ENCODE measurements at regions of chr15 and their contacts with region 1.

Region 1: GRCh38 chr15:41774062-41774881 is at the start of gene MAPKBP1:
- DNase-seq: peak; percentile 97 to 98
- H3K4me3 ChIP-seq: peak within 1 kb of the TSS; percentile 71 to 78 (median 73)
- H3K27ac ChIP-seq: peak within 1 kb of the TSS; percentile 51; the same call in 1 of the 2 replicates
- H3K4me1 ChIP-seq: peaks cover 0 to 21% (median 10%) of the 10 kb centered on the region in 4 experiments; a peak in 5 of 7 replicates
- H3K27me3 ChIP-seq: no peaks in the 10 kb centered on the region
- CTCF ChIP-seq: peak; percentile 84 to 98 (median 87)
- EP300 ChIP-seq: peak in 1 of 2 experiments; percentile 42; a peak in 1 of 3 replicates
- POLR2A ChIP-seq: peak; percentile 56 to 60; a peak in 2 of 3 replicates
- RAD21 ChIP-seq: peak; percentile 63 to 69
- total RNA-seq, gene MAPKBP1: 10.9 and 11.3 TPM in 2 replicates

Region 2: DNA sequence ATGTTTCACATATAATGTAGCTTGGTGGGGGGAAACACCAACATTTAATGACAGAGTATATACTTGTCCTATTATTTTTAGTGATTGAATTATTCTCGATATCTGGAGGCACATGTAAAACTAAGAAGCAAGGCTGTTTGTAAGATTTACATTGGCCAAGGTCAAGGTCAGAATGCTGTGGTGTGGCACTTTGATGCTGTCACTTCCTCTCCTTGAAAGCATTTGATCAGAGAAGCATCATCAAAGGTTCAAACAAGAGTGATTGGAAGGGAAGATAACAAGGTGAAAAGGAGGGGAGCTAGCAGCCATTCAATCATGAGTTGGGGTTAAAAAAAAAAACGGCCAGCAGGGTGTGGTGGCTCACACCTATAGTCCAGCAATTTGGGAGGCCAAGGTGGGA is 331.0 kb before region 1 on chr15:
- CTCF ChIA-PET with region 1: no interaction called
- POLR2A ChIA-PET with region 1: no interaction called
- DNase-seq: no peak
- H3K4me3 ChIP-seq: no peak overlapping the region
- H3K27ac ChIP-seq: no peak overlapping the region
- H3K4me1 ChIP-seq: no peaks in the 10 kb centered on the region
- H3K27me3 ChIP-seq: no peaks in the 10 kb centered on the region
- CTCF ChIP-seq: no peak
- EP300 ChIP-seq: no peak
- POLR2A ChIP-seq: no peak
- RAD21 ChIP-seq: no peak

Region 3: DNA sequence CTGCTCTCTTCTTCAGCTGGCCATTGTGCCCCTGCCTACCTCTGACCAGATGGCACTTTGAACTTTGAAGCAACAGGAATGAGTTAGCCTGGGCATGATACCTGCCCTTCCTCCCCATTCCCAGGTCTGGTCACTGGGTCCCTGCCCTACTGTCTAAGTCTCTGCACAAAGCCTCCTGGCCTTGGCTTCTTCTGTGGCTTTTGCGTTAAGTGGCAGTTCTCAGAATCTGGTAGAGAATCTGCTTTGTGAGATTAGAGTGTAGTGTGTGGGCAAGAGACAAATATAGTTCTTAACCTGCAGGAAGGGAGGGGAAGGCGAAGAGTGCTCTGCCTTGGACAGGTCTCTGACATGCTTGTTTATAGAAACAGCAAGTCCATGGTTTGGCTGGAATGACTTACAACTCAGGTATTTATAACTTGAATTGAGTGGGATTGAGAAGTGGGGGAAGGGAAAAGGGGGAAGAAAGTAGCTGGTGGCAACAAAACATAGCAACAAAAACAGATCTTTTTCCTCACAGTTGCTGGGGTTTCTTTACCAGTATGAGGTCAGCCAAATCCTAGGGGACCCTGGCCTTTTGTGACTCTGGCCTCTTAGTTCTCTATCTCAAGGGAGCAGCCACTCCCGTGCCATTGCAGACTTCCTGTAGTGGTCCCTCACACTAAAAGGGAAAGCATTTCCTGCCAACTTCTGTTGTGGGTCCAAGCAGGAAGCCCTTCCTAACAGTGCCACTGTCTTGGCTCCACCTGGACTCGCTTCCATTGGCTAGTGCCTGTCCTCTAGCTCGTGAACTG is 16.7 kb after region 1 on chr15:
- CTCF ChIA-PET with region 1: interaction called, 60 read pairs
- POLR2A ChIA-PET with region 1: interaction called, 24 read pairs
- DNase-seq: no peak
- H3K4me3 ChIP-seq: no peak overlapping the region
- H3K27ac ChIP-seq: no peak overlapping the region; the same call in 1 of the 2 replicates
- H3K4me1 ChIP-seq: peaks cover 6 to 19% (median 13%) of the 10 kb centered on the region in 4 experiments; a peak in 6 of 7 replicates
- H3K27me3 ChIP-seq: no peaks in the 10 kb centered on the region
- CTCF ChIP-seq: no peak
- EP300 ChIP-seq: no peak
- POLR2A ChIP-seq: no peak
- RAD21 ChIP-seq: no peak

Region 4: GRCh38 chr15:41811432-41812195 is 37.3 kb after region 1 on chr15:
- CTCF ChIA-PET with region 1: interaction called, 283 read pairs
- POLR2A ChIA-PET with region 1: interaction called, 23 read pairs
- DNase-seq: peak; percentile 65 to 91
- H3K4me3 ChIP-seq: no peak overlapping the region
- H3K27ac ChIP-seq: no peak overlapping the region
- H3K4me1 ChIP-seq: peaks cover 0 to 2% (median 0%) of the 10 kb centered on the region in 4 experiments; a peak in 2 of 7 replicates
- H3K27me3 ChIP-seq: no peaks in the 10 kb centered on the region
- CTCF ChIP-seq: peak; percentile 82 to 89 (median 83)
- EP300 ChIP-seq: no peak
- POLR2A ChIP-seq: no peak
- RAD21 ChIP-seq: peak; percentile 91 to 94

Region 5: GRCh38 chr15:41832875-41833274 is 58.6 kb after region 1 on chr15:
- CTCF ChIA-PET with region 1: interaction called, 16 read pairs
- POLR2A ChIA-PET with region 1: interaction called, 5 read pairs
- DNase-seq: no peak
- H3K4me3 ChIP-seq: no peak overlapping the region
- H3K27ac ChIP-seq: no peak overlapping the region
- H3K4me1 ChIP-seq: peaks cover 0 to 4% (median 2%) of the 10 kb centered on the region in 4 experiments; a peak in 3 of 7 replicates
- H3K27me3 ChIP-seq: no peaks in the 10 kb centered on the region
- CTCF ChIP-seq: no peak
- EP300 ChIP-seq: no peak
- POLR2A ChIP-seq: no peak
- RAD21 ChIP-seq: no peak

Region 6: DNA sequence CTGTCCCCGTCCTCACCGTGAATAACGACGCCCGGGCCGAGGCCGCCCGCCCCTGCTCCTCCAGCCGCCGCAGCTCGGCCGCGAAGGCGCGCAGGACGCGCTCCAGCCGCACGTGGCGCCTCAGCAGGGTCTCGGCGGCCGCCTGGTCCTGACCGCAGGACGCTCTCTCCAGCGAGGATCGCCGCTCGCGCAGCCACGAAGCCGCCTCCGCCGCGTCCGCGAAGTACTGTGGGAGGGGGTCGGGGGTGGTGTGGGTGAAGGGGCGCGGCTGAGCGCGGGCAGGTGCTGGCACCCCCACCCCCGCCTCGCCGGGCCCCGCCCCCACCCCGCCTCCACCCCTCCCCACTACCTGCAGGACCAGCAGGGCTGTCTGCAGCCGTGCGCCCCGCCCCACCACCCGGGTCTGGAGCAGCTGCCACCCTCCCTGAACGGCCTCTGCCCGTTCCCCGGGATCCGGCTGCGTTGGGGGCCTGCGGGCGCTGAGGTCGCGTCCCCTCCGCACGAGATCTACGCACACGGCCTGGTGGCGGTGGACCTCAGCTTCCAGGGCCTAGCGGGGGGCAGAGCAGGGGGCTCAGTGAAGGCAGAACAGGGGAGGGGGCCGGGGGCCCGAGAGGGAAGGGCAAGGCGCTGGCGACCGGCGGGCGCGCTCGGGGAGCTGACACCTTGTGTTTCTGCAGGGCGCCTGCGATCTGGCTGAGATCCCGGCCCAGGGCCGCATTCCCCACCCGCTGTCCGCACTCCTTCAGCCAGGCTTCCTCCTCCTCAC is 107.8 kb after region 1 on chr15:
- CTCF ChIA-PET with region 1: interaction called, 22 read pairs
- POLR2A ChIA-PET with region 1: interaction called, 4 read pairs
- DNase-seq: peak in 1 of 2 experiments; percentile 78
- H3K4me3 ChIP-seq: peak overlapping the region; percentile 33 to 68 (median 35)
- H3K27ac ChIP-seq: no peak overlapping the region
- H3K4me1 ChIP-seq: peaks cover 0 to 9% (median 4%) of the 10 kb centered on the region in 4 experiments; a peak in 5 of 7 replicates
- H3K27me3 ChIP-seq: peaks cover 21 to 36% (median 31%) of the 10 kb centered on the region in 4 experiments
- CTCF ChIP-seq: no peak
- EP300 ChIP-seq: no peak
- POLR2A ChIP-seq: no peak
- RAD21 ChIP-seq: no peak

Region 7: DNA sequence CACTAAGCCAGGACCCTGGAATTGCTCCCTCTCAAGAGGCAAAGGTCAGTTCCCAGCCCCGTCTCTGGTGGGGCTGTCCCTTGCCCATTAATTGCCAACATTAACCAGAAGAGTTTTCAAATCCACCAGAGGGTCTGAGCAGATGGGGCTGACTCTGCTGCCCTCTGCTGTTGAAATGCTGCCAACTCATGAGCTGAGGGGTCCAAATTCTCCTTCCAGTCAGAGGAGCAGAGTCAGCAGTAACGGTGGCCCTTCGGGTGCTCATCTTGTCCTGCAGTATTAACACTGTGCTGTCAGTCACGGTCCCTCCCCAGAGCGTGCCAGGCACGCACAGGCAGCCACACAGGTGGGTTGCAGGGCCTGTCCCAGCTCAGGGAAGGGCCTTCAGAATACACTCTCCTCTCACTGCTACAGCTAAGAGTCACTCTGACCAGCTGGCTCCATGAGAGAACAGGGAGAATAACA is 130.3 kb after region 1 on chr15:
- CTCF ChIA-PET with region 1: interaction called, 105 read pairs
- POLR2A ChIA-PET with region 1: interaction called, 3 read pairs
- DNase-seq: peak; percentile 50 to 87
- H3K4me3 ChIP-seq: no peak overlapping the region
- H3K27ac ChIP-seq: no peak overlapping the region
- H3K4me1 ChIP-seq: peaks cover 0 to 4% (median 2%) of the 10 kb centered on the region in 4 experiments; a peak in 1 of 7 replicates
- H3K27me3 ChIP-seq: no peaks in the 10 kb centered on the region; a peak in 1 of 7 replicates
- CTCF ChIP-seq: peak; percentile 84 to 97 (median 96)
- EP300 ChIP-seq: no peak
- POLR2A ChIP-seq: no peak
- RAD21 ChIP-seq: peak; percentile 93 to 96

Region 8: GRCh38 chr15:41957021-41957897 is 183.0 kb after region 1 on chr15:
- CTCF ChIA-PET with region 1: no interaction called
- POLR2A ChIA-PET with region 1: no interaction called
- DNase-seq: no peak
- H3K4me3 ChIP-seq: no peak overlapping the region
- H3K27ac ChIP-seq: no peak overlapping the region
- H3K4me1 ChIP-seq: peaks cover 0 to 4% (median 2%) of the 10 kb centered on the region in 4 experiments; a peak in 5 of 7 replicates
- H3K27me3 ChIP-seq: no peaks in the 10 kb centered on the region
- CTCF ChIP-seq: no peak
- EP300 ChIP-seq: no peak
- POLR2A ChIP-seq: no peak
- RAD21 ChIP-seq: no peak